ENCODE measurements at regions of chr5 and their contacts with region 1.

Region 1: GRCh38 chr5:111158105-111158744 is 66.0 kb upstream of the CAMK4 start:
- DNase-seq: peak; percentile 81
- H3K4me3 ChIP-seq: no peak overlapping the region
- H3K27ac ChIP-seq: no peak overlapping the region
- H3K4me1 ChIP-seq: no peaks in the 10 kb centered on the region
- H3K27me3 ChIP-seq: no peaks in the 10 kb centered on the region
- CTCF ChIP-seq: peak; percentile 96

Region 2: DNA sequence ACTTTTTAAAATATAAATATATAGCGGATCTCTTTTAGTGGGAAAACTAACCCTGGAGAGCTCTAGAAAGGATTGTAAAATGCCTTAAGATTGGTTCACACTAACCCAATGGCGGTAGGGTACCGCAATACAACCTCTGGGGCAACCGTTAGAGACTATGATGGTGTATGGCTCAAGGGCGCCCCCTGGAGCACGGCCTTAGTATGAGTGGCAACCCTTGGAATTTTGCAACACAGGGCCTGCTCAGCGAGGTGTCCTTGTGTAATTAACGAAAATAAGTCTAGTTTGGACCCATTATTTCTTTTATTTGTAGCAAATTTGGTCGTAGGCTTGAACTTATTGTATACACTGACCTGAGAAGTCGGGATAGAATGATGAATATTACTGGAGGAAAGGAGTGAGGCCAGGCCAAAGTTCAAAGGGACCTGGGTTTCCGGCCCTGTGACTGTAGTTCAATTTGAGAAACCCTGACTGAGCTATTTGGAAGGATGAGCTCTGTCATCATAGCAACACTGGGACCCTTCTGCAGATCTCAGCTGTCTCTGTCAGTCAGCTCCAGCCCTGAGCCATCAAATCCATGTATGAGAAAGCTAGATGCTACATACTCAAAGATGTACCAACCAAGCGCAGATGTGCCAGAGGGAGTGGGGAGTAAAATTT is 120.8 kb after region 1 on chr5:
- CTCF ChIA-PET with region 1: no interaction called
- POLR2A ChIA-PET with region 1: no interaction called
- intact Hi-C with region 1: loop called (anchors 1 kb)
- DNase-seq: peak; percentile 72
- H3K4me3 ChIP-seq: no peak overlapping the region
- H3K27ac ChIP-seq: no peak overlapping the region
- H3K4me1 ChIP-seq: no peaks in the 10 kb centered on the region
- H3K27me3 ChIP-seq: peaks cover 18% of the 10 kb centered on the region
- CTCF ChIP-seq: peak; percentile 89

Region 3: DNA sequence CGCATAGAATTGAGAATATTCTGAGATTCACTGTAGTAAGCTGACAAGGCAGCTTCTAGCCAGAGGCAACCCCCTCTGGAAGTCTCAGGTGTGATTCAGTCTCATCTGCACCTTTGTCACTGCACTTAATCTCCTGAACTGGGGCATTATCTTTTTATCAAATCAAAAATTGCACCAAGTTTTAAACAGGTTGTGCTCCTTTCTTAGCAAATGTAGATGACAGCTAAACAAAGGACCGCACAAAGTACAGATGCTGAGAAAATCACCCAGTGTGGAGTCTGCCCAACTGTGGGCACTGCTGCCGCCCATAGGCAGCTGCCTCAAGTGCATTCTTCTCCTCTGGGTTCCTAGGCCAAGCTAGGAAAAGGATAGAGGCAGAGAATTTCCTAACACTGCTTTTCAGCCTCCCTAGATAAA is 303.0 kb after region 1 on chr5:
- CTCF ChIA-PET with region 1: interaction called, 3 read pairs
- POLR2A ChIA-PET with region 1: no interaction called
- intact Hi-C with region 1: loop called (anchors 5 kb)
- DNase-seq: peak; percentile 42
- H3K4me3 ChIP-seq: no peak overlapping the region
- H3K27ac ChIP-seq: no peak overlapping the region
- H3K4me1 ChIP-seq: no peaks in the 10 kb centered on the region
- H3K27me3 ChIP-seq: no peaks in the 10 kb centered on the region
- CTCF ChIP-seq: peak; percentile 66

Region 4: DNA sequence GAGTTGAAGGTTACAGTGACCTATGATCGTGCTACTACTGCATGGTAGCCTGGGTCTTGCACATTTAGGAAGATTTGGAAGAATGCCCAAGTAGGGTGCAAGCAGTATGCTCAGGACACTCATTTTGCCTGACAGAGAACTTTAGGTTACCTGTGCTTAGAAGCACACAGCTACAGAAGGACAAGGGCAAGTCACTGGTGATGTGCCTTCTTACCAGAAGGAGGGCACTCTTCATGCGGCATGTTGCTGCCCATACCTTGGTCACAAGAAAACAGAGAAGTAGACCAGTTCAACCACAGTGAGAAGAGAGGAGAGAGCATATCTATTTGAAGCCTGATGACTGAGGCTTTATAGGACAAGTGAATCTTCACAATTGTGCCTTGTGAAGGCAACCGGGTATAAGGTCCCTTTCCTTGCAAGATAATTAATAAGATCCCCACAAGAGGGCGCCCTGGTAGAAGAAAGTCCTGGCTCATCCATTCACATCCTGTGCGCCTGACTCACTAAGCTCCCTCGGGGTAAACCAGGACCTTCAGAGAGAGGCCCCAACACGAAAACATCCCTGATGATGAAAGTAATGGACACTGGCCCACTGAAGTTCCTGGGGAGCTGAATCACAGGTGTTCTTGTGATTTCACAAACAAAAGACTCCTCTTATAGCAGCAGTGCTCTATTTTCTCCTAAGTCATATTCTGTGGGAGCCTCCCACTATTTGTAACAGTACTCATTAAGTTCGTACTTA is 392.2 kb after region 1 on chr5:
- CTCF ChIA-PET with region 1: interaction called, 3 read pairs
- POLR2A ChIA-PET with region 1: no interaction called
- intact Hi-C with region 1: loop called (anchors 10 kb)
- DNase-seq: peak; percentile 89
- H3K4me3 ChIP-seq: no peak overlapping the region
- H3K27ac ChIP-seq: no peak overlapping the region
- H3K4me1 ChIP-seq: peaks cover 5% of the 10 kb centered on the region
- H3K27me3 ChIP-seq: no peaks in the 10 kb centered on the region
- CTCF ChIP-seq: peak; percentile 73